AG04449 (cell line): ENCODE measurements at regions of chr10 and their contacts with region 1.

Region 1: GRCh38 chr10:4849555-4850242 is 23.7 kb downstream of the AKR1E2 start:
- DNase-seq: peak; percentile 79
- H3K4me3 ChIP-seq: no peak overlapping the region
- CTCF ChIP-seq: peak; percentile 99

Region 2: GRCh38 chr10:4820804-4821401 is 28.8 kb before region 1 on chr10:
- CTCF ChIA-PET with region 1: interaction called, 58 read pairs
- POLR2A ChIA-PET with region 1: no interaction called
- DNase-seq: no peak
- H3K4me3 ChIP-seq: no peak overlapping the region
- CTCF ChIP-seq: no peak

Region 3: GRCh38 chr10:4867520-4868356 is 18.0 kb after region 1 on chr10:
- CTCF ChIA-PET with region 1: interaction called, 27 read pairs
- POLR2A ChIA-PET with region 1: no interaction called
- DNase-seq: no peak
- H3K4me3 ChIP-seq: no peak overlapping the region
- CTCF ChIP-seq: no peak

Region 4: GRCh38 chr10:4981722-4982471 is 132.2 kb after region 1 on chr10:
- CTCF ChIA-PET with region 1: interaction called, 59 read pairs
- POLR2A ChIA-PET with region 1: no interaction called
- DNase-seq: no peak
- H3K4me3 ChIP-seq: no peak overlapping the region
- CTCF ChIP-seq: peak; percentile 22

Region 5: GRCh38 chr10:5299950-5300349 is 450.3 kb after region 1 on chr10:
- CTCF ChIA-PET with region 1: interaction called, 42 read pairs
- POLR2A ChIA-PET with region 1: no interaction called
- DNase-seq: no peak
- H3K4me3 ChIP-seq: no peak overlapping the region
- CTCF ChIP-seq: no peak

Region 6: GRCh38 chr10:5412277-5412941 is 562.7 kb after region 1 on chr10 and contains the start of gene NET1:
- CTCF ChIA-PET with region 1: interaction called, 12 read pairs
- POLR2A ChIA-PET with region 1: no interaction called
- DNase-seq: no peak
- H3K4me3 ChIP-seq: peak within 1 kb of the TSS; percentile 79
- CTCF ChIP-seq: no peak

Region 7: GRCh38 chr10:5623081-5623748 is 773.5 kb after region 1 on chr10:
- CTCF ChIA-PET with region 1: interaction called, 14 read pairs
- POLR2A ChIA-PET with region 1: no interaction called
- DNase-seq: peak; percentile 21
- H3K4me3 ChIP-seq: no peak overlapping the region
- CTCF ChIP-seq: peak; percentile 96